GM12878 (cell line): ENCODE measurements at regions of chr10 and their contacts with region 1.

Region 1: DNA sequence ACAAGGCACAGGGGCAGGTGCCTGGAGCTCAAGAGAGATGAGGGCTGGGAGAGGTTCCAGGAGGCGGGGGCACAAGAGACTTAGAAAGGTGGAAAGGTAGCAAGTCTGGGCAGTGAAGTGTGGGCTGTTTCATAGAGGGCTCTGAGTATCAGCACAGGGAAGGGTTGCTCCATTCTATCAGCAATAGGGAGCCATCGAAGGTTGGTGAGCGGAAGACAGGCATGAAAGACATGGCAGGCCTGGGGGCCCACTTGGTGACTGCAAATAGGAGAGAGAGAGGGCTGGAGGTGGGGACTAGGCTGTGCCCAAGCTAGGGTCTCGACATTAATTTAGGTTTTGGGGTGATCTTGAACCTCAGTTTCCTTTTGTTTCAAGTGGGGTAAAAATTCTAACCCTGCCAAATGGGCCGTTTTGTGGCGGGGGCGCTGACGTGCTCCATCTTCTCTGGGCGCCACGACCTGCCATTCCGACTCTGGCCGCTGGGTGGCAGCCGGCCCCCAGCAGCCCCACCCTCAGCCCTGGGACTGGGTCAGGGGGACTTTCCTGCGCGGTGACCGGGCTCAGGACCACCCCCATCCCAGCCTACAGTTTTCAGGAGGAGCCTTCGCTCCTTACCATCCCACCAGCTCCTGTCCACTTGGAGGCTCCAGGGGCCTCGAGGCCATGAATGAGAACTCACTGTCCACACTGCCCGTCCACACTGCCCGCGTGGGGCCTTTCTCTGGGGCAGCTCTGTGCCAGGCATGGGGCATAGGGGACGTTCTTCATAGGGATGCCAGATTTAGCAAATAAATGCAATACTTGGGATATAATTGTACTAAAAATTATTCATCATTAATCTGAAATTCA is 37.2 kb upstream of the PCBD1 start:
- DNase-seq: no peak
- ATAC-seq: peak; percentile 92
- H3K4me3 ChIP-seq: no peak overlapping the region
- H3K27ac ChIP-seq: no peak overlapping the region
- H3K4me1 ChIP-seq: no peaks in the 10 kb centered on the region
- H3K27me3 ChIP-seq: no peaks in the 10 kb centered on the region; a peak in 3 of 4 replicates
- CTCF ChIP-seq: peak; percentile 86 to 95 (median 95); a peak in 5 of 6 replicates
- EP300 ChIP-seq: no peak
- POLR2A ChIP-seq: no peak
- RAD21 ChIP-seq: peak; percentile 88

Region 2: GRCh38 chr10:70093335-70093944 is 832.2 kb before region 1 on chr10:
- CTCF ChIA-PET with region 1: no interaction called
- POLR2A ChIA-PET with region 1: no interaction called
- RAD21 ChIA-PET with region 1: no interaction called
- SMC1A ChIA-PET with region 1: no interaction called
- in situ Hi-C with region 1: no loop called
- intact Hi-C with region 1: no loop called
- DNase-seq: no peak
- ATAC-seq: peak; percentile 41
- H3K4me3 ChIP-seq: no peak overlapping the region
- H3K27ac ChIP-seq: no peak overlapping the region
- H3K4me1 ChIP-seq: peaks cover 7% of the 10 kb centered on the region; the same call in 1 of the 2 replicates
- H3K27me3 ChIP-seq: no peaks in the 10 kb centered on the region; a peak in 1 of 4 replicates
- CTCF ChIP-seq: no peak
- EP300 ChIP-seq: no peak
- POLR2A ChIP-seq: no peak
- RAD21 ChIP-seq: no peak

Region 3: GRCh38 chr10:70958396-70958795 is 32.8 kb after region 1 on chr10:
- CTCF ChIA-PET with region 1: no interaction called
- POLR2A ChIA-PET with region 1: no interaction called
- RAD21 ChIA-PET with region 1: no interaction called
- SMC1A ChIA-PET with region 1: no interaction called
- in situ Hi-C with region 1: no loop called
- intact Hi-C with region 1: no loop called
- DNase-seq: no peak
- ATAC-seq: no peak
- H3K4me3 ChIP-seq: no peak overlapping the region
- H3K27ac ChIP-seq: no peak overlapping the region
- H3K4me1 ChIP-seq: no peaks in the 10 kb centered on the region
- H3K27me3 ChIP-seq: peaks cover 1 to 5% of the 10 kb centered on the region in 2 experiments
- CTCF ChIP-seq: no peak
- EP300 ChIP-seq: no peak
- POLR2A ChIP-seq: no peak
- RAD21 ChIP-seq: no peak

Region 4: DNA sequence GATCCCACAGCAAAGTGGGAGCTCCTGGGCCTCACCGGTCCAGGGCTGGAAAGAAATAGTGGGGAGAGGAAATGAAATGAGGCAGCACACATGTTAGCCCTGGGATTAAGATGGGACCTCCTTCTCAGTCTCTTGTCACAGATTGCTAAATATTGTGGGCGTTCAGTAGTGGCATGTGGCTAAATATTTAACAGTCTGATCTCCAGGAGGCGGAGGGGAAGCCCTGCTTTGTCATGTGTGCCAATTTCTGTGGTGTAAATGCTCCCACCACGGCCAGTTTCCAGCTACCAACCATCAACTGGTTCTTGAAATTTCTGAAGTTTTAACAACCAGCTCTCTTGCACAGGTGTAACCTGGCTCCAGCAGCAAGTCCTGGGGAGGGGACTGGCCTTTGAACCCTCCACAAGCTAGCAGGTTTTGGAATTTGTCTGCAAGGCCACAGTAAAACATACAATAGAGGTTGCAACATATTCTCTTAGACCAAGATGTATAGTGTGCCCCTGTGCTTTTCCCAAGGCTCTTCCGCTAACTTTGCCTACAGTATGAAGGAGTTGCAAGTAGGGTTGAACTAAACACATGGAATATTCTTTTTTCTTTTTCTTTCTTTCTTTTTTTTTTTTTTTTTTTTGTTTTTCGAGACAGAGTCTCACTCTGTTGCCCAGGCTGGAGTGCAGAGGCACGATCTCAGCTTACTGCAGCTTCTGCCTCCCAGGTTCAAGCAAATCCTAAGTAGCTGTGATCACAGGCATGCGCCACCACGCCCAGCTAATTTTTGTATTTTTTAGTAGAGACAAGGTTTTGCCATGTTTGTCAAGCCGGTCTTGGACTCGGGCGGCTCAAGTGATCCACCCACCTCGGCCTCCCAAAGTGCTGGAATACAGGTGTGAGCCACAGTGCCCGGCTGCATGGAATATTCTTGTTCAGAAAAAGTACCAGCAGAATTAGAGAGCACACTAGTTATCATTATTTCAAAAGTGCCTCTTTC is 65.8 kb after region 1 on chr10:
- CTCF ChIA-PET with region 1: interaction called, 19 read pairs
- POLR2A ChIA-PET with region 1: no interaction called
- RAD21 ChIA-PET with region 1: interaction called, 4 read pairs
- SMC1A ChIA-PET with region 1: interaction called, 14 read pairs
- in situ Hi-C with region 1: no loop called
- intact Hi-C with region 1: no loop called
- DNase-seq: no peak
- ATAC-seq: peak; percentile 91
- H3K4me3 ChIP-seq: no peak overlapping the region
- H3K27ac ChIP-seq: no peak overlapping the region
- H3K4me1 ChIP-seq: no peaks in the 10 kb centered on the region
- H3K27me3 ChIP-seq: no peaks in the 10 kb centered on the region
- CTCF ChIP-seq: no peak
- EP300 ChIP-seq: no peak
- POLR2A ChIP-seq: no peak
- RAD21 ChIP-seq: no peak

Region 5: GRCh38 chr10:71064413-71065118 is 139.0 kb after region 1 on chr10:
- CTCF ChIA-PET with region 1: interaction called, 17 read pairs
- POLR2A ChIA-PET with region 1: no interaction called
- RAD21 ChIA-PET with region 1: interaction called, 6 read pairs
- SMC1A ChIA-PET with region 1: no interaction called
- in situ Hi-C with region 1: no loop called
- intact Hi-C with region 1: no loop called
- DNase-seq: no peak
- ATAC-seq: no peak
- H3K4me3 ChIP-seq: no peak overlapping the region
- H3K27ac ChIP-seq: no peak overlapping the region
- H3K4me1 ChIP-seq: no peaks in the 10 kb centered on the region
- H3K27me3 ChIP-seq: no peaks in the 10 kb centered on the region; a peak in 2 of 4 replicates
- CTCF ChIP-seq: peak in 2 of 3 experiments; percentile 6 to 25; a peak in 1 of 6 replicates
- EP300 ChIP-seq: no peak
- POLR2A ChIP-seq: no peak
- RAD21 ChIP-seq: no peak

Region 6: GRCh38 chr10:71212318-71213126 is 286.9 kb after region 1 on chr10 and contains the start of gene UNC5B:
- CTCF ChIA-PET with region 1: interaction called, 22 read pairs
- POLR2A ChIA-PET with region 1: no interaction called
- RAD21 ChIA-PET with region 1: no interaction called
- SMC1A ChIA-PET with region 1: interaction called, 4 read pairs
- in situ Hi-C with region 1: loop called (anchors 5 kb)
- intact Hi-C with region 1: loop called (anchors 1 kb)
- DNase-seq: no peak
- ATAC-seq: peak; percentile 66
- H3K4me3 ChIP-seq: no peak within 1 kb of the TSS
- H3K27ac ChIP-seq: no peak within 1 kb of the TSS
- H3K4me1 ChIP-seq: no peaks in the 10 kb centered on the region
- H3K27me3 ChIP-seq: peaks cover 16 to 18% of the 10 kb centered on the region in 2 experiments
- CTCF ChIP-seq: no peak
- EP300 ChIP-seq: no peak
- POLR2A ChIP-seq: no peak
- RAD21 ChIP-seq: no peak
- polyA plus RNA-seq, gene UNC5B: not detected

Region 7: DNA sequence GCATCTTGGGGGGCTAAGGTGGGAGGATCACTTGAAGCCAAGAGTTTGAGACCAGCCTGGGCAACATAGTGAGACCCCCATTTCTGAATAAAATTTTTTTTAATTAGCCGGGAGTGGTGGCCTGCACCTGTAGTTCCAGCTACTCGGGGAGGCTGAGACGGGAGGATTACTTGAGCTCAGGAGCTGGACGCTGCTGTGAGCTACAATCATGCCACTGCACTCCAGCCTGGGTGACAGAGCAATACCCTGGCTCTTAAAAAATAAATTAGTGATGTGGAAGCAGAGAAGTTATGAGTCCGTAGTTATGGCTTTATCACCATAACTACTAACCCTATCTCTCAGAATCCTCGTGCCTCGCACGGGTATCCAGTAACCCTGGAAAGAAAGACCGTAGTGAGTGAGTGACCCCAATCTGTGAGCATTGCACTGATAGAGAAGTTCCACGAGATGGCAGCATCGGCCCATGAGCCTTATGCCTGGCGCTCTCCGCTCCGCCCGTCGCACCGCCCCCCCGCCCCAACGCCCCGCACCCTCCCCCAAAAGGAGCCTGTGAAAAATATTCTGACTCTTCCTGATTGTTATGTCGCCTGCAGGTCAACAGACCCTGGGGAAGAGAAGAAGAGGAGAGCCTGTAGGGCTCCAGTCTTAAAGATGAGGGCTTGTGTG is 388.6 kb after region 1 on chr10:
- CTCF ChIA-PET with region 1: no interaction called
- POLR2A ChIA-PET with region 1: no interaction called
- RAD21 ChIA-PET with region 1: no interaction called
- SMC1A ChIA-PET with region 1: no interaction called
- in situ Hi-C with region 1: no loop called
- intact Hi-C with region 1: no loop called
- DNase-seq: no peak
- ATAC-seq: peak; percentile 55
- H3K4me3 ChIP-seq: no peak overlapping the region
- H3K27ac ChIP-seq: no peak overlapping the region
- H3K4me1 ChIP-seq: peaks cover 12% of the 10 kb centered on the region
- H3K27me3 ChIP-seq: no peaks in the 10 kb centered on the region
- CTCF ChIP-seq: peak; percentile 62 to 91 (median 76)
- EP300 ChIP-seq: no peak
- POLR2A ChIP-seq: no peak
- RAD21 ChIP-seq: peak; percentile 74

Region 8: DNA sequence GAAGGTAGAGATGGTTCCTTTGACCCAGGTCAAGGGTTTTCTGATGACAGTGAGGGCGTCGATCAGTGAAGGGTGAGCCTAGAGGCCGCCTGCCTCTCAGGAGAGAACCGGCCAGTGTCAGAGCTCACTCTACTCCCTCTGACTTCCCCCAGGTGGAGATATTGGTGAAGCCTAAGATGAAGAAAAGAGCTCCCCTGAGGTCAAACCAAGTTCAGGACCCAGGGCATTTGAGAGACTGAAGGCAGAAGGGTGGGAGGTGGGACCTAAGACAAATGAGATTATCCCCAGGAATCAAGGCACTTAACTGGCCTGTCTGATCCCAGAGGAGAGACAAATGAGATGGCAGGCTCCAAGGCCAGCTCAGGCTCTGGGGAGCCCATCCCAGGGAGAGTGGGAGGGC is 575.8 kb after region 1 on chr10:
- CTCF ChIA-PET with region 1: no interaction called
- POLR2A ChIA-PET with region 1: no interaction called
- RAD21 ChIA-PET with region 1: no interaction called
- SMC1A ChIA-PET with region 1: no interaction called
- in situ Hi-C with region 1: no loop called
- intact Hi-C with region 1: no loop called
- DNase-seq: no peak
- ATAC-seq: no peak
- H3K4me3 ChIP-seq: no peak overlapping the region
- H3K27ac ChIP-seq: no peak overlapping the region
- H3K4me1 ChIP-seq: no peaks in the 10 kb centered on the region
- H3K27me3 ChIP-seq: peaks cover 1 to 2% of the 10 kb centered on the region in 2 experiments; a peak in 1 of 4 replicates
- CTCF ChIP-seq: no peak
- EP300 ChIP-seq: no peak
- POLR2A ChIP-seq: no peak
- RAD21 ChIP-seq: no peak